Activated CD4-positive, alpha-beta T cell treated with anti-CD3 and anti-CD28 coated beads, Interleukin-2, amount 10 ng/mL, durations not matched to agents 24 days and 14 days (primary cell): ENCODE measurements at regions of chr19 and their contacts with region 1.

Region 1: GRCh38 chr19:29576761-29577648 is 29.1 kb upstream of the POP4 start:
- DNase-seq: no peak
- H3K4me3 Mint-ChIP-seq: peak overlapping the region; percentile 12
- H3K27ac Mint-ChIP-seq: no peak overlapping the region
- H3K4me1 Mint-ChIP-seq: peaks cover 26% of the 10 kb centered on the region
- H3K27me3 Mint-ChIP-seq: peaks cover 37% of the 10 kb centered on the region

Region 2: GRCh38 chr19:29564574-29565005 is 12.4 kb before region 1 on chr19:
- intact Hi-C with region 1: loop called (anchors 1 kb)
- DNase-seq: no peak
- H3K4me3 Mint-ChIP-seq: peak overlapping the region; percentile 7
- H3K27ac Mint-ChIP-seq: peak overlapping the region; percentile 51
- H3K4me1 Mint-ChIP-seq: peaks cover 9% of the 10 kb centered on the region
- H3K27me3 Mint-ChIP-seq: peaks cover 13% of the 10 kb centered on the region

Region 3: DNA sequence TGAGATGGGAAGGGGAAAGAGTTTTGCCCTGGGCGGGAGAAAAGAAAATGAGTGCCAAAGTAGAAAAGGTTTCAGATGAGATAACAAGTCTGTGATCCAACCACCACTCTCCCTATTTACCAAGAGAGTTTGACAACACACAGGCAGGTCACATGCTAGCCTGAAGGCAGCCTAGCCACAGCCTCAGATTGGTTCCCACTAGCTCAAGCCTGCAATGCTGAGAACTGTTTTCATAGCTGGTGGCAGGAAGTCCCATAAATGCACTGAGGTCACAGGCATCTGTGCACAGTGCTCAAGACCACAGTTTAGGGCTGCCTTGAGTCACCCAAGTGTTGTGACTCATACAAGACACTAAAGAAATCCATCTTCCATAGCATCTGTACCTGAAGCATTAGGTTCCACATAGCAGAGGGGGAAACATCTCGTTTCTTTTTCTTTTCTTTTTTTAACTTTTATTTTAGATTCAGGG is 10.5 kb after region 1 on chr19:
- intact Hi-C with region 1: loop called (anchors 1 kb)
- DNase-seq: peak; percentile 93
- H3K4me3 Mint-ChIP-seq: peak overlapping the region; percentile 39
- H3K27ac Mint-ChIP-seq: peak overlapping the region; percentile 78
- H3K4me1 Mint-ChIP-seq: peaks cover 29% of the 10 kb centered on the region
- H3K27me3 Mint-ChIP-seq: peaks cover 21% of the 10 kb centered on the region